GM12878 (cell line): ENCODE measurements at regions of chr1 and their contacts with region 1.

Region 1: GRCh38 chr1:110657351-110657750 is 17.4 kb downstream of the KCNA3 start:
- DNase-seq: no peak
- ATAC-seq: no peak
- H3K4me3 ChIP-seq: no peak overlapping the region
- H3K27ac ChIP-seq: no peak overlapping the region
- H3K4me1 ChIP-seq: no peaks in the 10 kb centered on the region
- H3K27me3 ChIP-seq: no peaks in the 10 kb centered on the region
- CTCF ChIP-seq: no peak
- EP300 ChIP-seq: no peak
- POLR2A ChIP-seq: no peak
- RAD21 ChIP-seq: no peak

Region 2: GRCh38 chr1:110645821-110646735 is 11.3 kb before region 1 on chr1:
- CTCF ChIA-PET with region 1: no interaction called
- POLR2A ChIA-PET with region 1: no interaction called
- RAD21 ChIA-PET with region 1: interaction called, 3 read pairs
- SMC1A ChIA-PET with region 1: interaction called, 20 read pairs
- in situ Hi-C with region 1: no loop called
- intact Hi-C with region 1: no loop called
- DNase-seq: no peak
- ATAC-seq: no peak
- H3K4me3 ChIP-seq: no peak overlapping the region
- H3K27ac ChIP-seq: no peak overlapping the region
- H3K4me1 ChIP-seq: peaks cover 23% of the 10 kb centered on the region
- H3K27me3 ChIP-seq: no peaks in the 10 kb centered on the region
- CTCF ChIP-seq: no peak
- EP300 ChIP-seq: no peak
- POLR2A ChIP-seq: no peak
- RAD21 ChIP-seq: no peak

Region 3: DNA sequence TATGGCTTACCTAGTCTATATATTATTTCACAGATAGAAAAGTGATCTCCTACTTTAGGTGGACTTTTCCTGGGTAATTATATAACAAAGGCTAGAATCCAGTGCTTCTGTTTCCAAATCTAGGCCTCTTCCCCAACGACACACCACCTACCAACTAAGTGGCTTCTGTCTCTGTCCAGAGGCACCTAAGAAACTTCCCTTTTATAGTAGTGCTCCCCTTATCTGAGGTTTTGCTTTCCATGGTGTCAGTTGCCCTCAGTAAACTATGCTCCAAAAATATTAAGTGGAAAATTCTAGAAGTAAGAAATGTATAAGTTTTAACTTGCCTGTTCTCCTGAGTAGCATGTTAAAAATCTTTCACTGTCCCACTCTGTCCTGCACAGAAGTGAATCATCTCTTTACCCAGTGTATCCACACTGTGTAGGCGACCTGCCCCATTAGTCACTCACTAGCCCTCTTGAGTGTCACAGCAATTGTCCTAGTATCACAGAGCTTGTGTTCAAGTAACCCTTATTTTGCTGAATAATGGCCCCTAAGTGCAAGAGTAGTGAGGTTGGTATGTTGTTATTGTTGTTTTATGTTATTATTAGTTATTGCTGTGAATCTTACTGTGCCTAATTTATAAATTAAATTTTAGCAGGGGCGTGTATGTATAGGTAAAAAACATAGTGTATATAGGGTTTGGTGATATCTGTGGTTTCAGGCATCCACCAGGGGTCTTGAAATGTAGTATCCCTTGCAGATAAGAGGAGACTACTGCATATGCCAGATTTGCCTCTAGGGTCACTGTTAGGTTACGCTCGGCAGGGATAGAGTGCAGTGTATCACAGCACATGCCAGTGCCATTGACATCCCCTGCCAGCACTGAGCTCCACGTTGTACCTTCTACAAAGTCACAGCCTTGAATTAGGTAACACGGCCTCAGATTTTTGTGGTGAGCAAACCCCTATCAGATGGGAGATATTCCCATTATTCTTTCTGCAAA is 200.9 kb after region 1 on chr1:
- CTCF ChIA-PET with region 1: no interaction called
- POLR2A ChIA-PET with region 1: no interaction called
- RAD21 ChIA-PET with region 1: no interaction called
- SMC1A ChIA-PET with region 1: no interaction called
- in situ Hi-C with region 1: no loop called
- intact Hi-C with region 1: no loop called
- DNase-seq: no peak
- ATAC-seq: peak; percentile 47; the same call in 2 of the 3 replicates
- H3K4me3 ChIP-seq: no peak overlapping the region
- H3K27ac ChIP-seq: no peak overlapping the region
- H3K4me1 ChIP-seq: no peaks in the 10 kb centered on the region; the same call in 1 of the 2 replicates
- H3K27me3 ChIP-seq: no peaks in the 10 kb centered on the region
- CTCF ChIP-seq: no peak
- EP300 ChIP-seq: no peak
- POLR2A ChIP-seq: no peak
- RAD21 ChIP-seq: no peak